BJ (cell line): ENCODE measurements at regions of chr4 and their contacts with region 1.

Region 1: DNA sequence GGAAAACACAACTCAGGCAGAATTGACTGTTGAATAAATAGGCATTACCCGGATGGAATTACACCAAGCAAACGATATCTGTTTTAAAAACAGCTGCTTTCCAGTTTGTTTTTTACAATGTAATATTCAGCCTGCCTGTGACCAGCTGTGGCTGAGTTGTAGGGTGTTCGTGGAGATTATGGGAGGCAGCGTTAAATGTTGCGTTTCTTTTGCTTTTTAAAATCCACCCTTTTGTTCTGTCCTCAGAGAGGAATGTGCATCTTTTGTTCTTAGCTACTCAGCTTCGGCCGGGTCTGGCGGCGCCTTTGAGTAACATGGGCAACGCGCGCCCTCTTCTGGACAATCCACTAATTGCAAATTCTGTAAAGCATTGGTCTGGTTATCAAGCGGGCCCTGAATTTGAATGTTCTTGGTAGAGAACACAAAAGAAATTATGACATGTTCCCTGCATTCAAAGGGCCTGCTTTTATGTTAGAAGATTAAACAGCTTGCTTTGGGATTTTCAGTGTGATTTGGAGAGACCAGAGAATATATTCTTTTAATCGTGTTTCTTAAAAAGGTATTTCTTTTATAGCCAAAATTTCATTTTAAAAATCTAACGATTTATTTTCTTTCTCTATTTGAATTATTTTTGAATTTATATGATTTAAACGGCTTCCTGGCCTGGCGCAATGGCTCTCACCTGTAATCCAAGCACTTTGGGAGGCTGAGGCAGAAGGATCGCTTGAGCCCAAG is 76.3 kb upstream of the TRIM2 start:
- DNase-seq: no peak
- H3K4me3 ChIP-seq: no peak overlapping the region; the same call in 1 of the 2 replicates
- H3K27me3 ChIP-seq: peaks cover 1% of the 10 kb centered on the region; the same call in 1 of the 2 replicates
- CTCF ChIP-seq: peak; percentile 79

Region 2: GRCh38 chr4:152850377-152850776 is 277.6 kb before region 1 on chr4:
- CTCF ChIA-PET with region 1: interaction called, 51 read pairs
- POLR2A ChIA-PET with region 1: no interaction called
- DNase-seq: no peak
- H3K4me3 ChIP-seq: no peak overlapping the region
- H3K27me3 ChIP-seq: no peaks in the 10 kb centered on the region
- CTCF ChIP-seq: no peak

Region 3: DNA sequence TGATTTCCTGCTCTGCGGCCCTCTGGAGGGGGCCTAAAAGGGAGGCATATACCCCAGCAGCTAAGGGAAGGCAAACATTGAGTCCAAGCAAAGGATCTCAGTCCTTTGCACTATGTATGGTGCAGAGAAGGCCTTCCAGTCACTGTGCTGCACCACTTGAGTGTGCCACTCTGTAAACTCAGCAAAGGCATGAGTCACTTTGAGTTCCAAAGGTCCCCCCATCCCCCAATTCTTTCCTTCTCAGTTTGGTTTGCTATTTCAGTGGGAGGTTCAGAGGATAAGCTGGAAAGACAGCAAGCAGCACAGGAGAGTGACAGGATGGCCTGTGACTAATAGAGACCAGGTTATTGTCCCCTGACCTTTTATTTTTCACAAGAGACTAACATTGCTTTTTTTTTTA is 60.5 kb before region 1 on chr4:
- CTCF ChIA-PET with region 1: no interaction called
- POLR2A ChIA-PET with region 1: no interaction called
- DNase-seq: no peak
- H3K4me3 ChIP-seq: no peak overlapping the region
- H3K27me3 ChIP-seq: no peaks in the 10 kb centered on the region; the same call in 1 of the 2 replicates
- CTCF ChIP-seq: no peak

Region 4: GRCh38 chr4:153089742-153090141 is 38.2 kb before region 1 on chr4:
- CTCF ChIA-PET with region 1: interaction called, 189 read pairs
- POLR2A ChIA-PET with region 1: no interaction called
- DNase-seq: no peak
- H3K4me3 ChIP-seq: no peak overlapping the region
- H3K27me3 ChIP-seq: peaks cover 2% of the 10 kb centered on the region; the same call in 1 of the 2 replicates
- CTCF ChIP-seq: no peak

Region 5: DNA sequence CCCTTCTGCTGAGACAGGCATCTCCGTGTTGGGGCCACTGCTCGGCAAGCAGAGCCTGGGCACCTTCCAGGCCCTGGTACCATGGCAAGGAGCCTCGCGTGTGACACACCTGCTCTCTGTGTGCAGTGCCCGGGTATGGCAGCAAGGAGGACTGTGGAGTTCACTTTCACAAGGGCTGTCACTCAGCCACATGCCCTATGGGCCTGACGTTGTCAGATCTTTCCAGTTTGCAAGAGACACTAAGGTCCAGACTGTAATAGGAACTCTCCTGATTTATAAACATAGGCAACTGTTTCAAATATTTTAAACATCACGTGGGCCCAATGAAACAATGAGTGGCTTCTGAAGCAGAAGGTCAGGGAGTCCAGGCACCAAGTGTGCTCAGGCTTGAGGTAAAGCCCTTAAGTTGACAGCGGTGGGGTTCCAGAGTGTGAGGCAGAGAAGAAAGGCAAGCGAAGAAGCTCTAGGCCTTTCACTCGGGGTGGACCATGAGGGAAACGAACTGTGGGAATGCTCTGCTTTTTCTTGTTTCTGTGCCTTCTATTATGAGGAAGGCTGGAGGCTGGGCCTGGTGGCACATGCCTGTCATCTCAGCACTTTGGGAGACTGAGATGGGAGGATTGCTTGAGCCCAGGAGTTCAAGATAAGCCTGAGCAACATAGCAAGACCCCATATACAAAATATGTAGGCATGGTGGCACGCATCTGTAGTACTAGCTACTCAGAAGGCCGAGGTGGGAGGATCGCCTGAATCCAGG is 32.3 kb before region 1 on chr4:
- CTCF ChIA-PET with region 1: interaction called, 35 read pairs
- POLR2A ChIA-PET with region 1: no interaction called
- DNase-seq: no peak
- H3K4me3 ChIP-seq: no peak overlapping the region
- H3K27me3 ChIP-seq: no peaks in the 10 kb centered on the region; the same call in 1 of the 2 replicates
- CTCF ChIP-seq: no peak

Region 6: DNA sequence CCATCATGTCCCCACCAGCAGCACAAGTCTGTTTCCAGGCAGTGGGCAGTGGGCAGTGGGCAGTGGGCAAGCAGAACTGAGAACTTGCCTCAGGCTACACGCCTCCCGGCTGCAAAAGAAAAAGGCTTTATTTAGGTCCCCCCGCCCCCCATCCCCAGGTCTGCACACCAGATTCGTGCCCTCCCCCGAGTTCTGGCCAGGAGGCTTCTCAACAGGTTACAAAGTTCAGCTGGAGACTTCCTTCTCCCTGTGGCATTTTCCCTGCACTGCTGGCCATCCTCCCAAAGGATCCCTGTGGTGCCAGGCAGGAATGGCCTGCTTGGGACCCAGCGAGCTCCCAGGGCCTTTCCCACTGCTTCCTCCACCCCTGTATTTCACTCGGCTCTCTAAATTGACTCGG is 20.7 kb before region 1 on chr4:
- CTCF ChIA-PET with region 1: interaction called, 21 read pairs
- POLR2A ChIA-PET with region 1: no interaction called
- DNase-seq: no peak
- H3K4me3 ChIP-seq: no peak overlapping the region
- H3K27me3 ChIP-seq: peaks cover 11% of the 10 kb centered on the region
- CTCF ChIP-seq: no peak

Region 7: GRCh38 chr4:153115322-153116290 is 12.3 kb before region 1 on chr4:
- CTCF ChIA-PET with region 1: interaction called, 17 read pairs
- POLR2A ChIA-PET with region 1: no interaction called
- DNase-seq: peak; percentile 62
- H3K4me3 ChIP-seq: peak overlapping the region; percentile 21
- H3K27me3 ChIP-seq: no peaks in the 10 kb centered on the region; the same call in 1 of the 2 replicates
- CTCF ChIP-seq: no peak

Region 8: DNA sequence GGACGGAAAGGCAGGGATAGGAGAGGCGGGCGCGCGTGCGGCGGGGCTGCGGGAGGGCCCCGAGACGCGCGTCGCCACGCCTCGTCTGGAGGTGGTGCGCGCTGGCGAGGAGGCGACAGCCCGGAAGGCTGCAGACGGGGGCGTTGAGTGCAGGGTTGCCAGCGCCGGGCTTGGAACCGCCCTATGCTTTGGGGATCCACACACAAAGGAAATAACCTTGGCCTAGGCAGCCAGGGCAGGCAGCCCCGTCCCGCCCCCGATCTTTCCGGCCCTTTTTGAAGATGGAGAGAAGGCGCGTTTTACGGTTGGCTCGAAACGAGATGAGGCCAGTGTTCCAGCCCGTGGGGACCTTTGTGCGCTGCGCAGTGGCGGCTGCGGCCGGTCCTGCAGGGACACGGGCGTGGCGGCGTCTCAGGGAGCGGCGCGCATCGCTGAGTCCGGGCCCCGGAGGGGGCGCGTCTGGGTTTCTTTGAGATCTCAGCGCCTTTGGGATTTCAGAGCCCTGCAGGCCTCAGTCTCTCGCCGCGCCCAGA is 25.5 kb after region 1 on chr4:
- CTCF ChIA-PET with region 1: no interaction called
- POLR2A ChIA-PET with region 1: no interaction called
- DNase-seq: no peak
- H3K4me3 ChIP-seq: peak overlapping the region; percentile 46
- H3K27me3 ChIP-seq: peaks cover 7% of the 10 kb centered on the region; the same call in 1 of the 2 replicates
- CTCF ChIP-seq: no peak

Region 9: GRCh38 chr4:153364997-153365396 is 237.1 kb after region 1 on chr4:
- CTCF ChIA-PET with region 1: no interaction called
- POLR2A ChIA-PET with region 1: no interaction called
- DNase-seq: no peak
- H3K4me3 ChIP-seq: no peak overlapping the region
- H3K27me3 ChIP-seq: no peaks in the 10 kb centered on the region
- CTCF ChIP-seq: no peak